K562 (cell line): ENCODE measurements at regions of chr17 and their contacts with region 1.

Region 1: DNA sequence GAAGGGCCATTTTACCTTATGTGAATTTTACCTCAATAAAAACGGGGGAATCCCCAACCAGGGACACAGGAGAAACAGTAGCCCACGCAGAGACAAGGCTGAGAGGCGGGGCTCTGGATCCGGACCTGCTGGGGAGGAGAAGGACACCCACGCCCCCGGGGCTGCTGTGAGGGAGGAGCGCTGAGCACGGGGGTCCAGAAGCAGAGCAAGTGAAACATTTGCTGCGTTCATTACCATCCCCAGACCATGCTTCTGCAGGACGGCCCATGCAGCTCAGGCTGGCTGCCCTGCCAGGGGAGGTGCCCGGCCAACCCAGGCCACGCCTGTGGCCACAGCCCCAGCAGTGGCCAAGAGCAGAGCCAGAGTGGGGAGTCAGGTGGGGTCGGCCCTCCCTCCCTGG is 50.0 kb downstream of the KCNJ18 start:
- DNase-seq: peak in 3 of 4 experiments; percentile 5 to 11 (median 7)
- ATAC-seq: peak; percentile 34; the same call in 1 of the 3 replicates
- H3K4me3 ChIP-seq: no peak overlapping the region
- H3K27ac ChIP-seq: no peak overlapping the region
- H3K4me1 ChIP-seq: no peaks in the 10 kb centered on the region
- H3K27me3 ChIP-seq: no peaks in the 10 kb centered on the region
- CTCF ChIP-seq: no peak
- EP300 ChIP-seq: no peak
- POLR2A ChIP-seq: no peak
- RAD21 ChIP-seq: no peak

Region 2: DNA sequence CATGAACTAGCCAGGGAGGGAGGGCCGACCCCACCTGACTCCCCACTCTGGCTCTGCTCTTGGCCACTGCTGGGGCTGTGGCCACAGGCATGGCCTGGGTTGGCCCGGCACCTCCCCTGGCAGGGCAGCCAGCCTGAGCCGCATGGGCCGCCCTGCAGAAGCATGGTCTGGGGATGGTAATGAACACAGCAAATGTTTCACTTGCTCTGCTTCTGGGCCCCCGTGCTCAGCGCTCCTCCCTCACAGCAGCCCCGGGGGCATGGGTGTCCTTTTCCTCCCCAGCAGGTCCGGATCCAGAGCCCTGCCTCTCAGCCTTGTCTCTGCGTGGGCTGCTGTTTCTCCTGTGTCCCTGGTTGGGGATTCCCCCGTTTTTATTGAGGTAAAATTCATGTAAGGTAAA is 397.1 kb before region 1 on chr17:
- CTCF ChIA-PET with region 1: no interaction called
- POLR2A ChIA-PET with region 1: no interaction called
- in situ Hi-C with region 1: loop called (anchors 5 kb)
- intact Hi-C with region 1: no loop called
- DNase-seq: no peak
- ATAC-seq: no peak; the same call in 2 of the 3 replicates
- H3K4me3 ChIP-seq: no peak overlapping the region
- H3K27ac ChIP-seq: no peak overlapping the region
- H3K4me1 ChIP-seq: no peaks in the 10 kb centered on the region
- H3K27me3 ChIP-seq: peaks cover 0 to 4% of the 10 kb centered on the region in 2 experiments; a peak in 1 of 5 replicates
- CTCF ChIP-seq: no peak
- EP300 ChIP-seq: no peak
- POLR2A ChIP-seq: no peak
- RAD21 ChIP-seq: no peak